Mammary epithelial cell (primary cell): ENCODE measurements at regions of chr18 and their contacts with region 1.

Region 1: GRCh38 chr18:71808616-71809015 is 735.5 kb downstream of the CBLN2 start:
- DNase-seq: no peak
- H3K4me3 ChIP-seq: no peak overlapping the region
- H3K27ac ChIP-seq: no peak overlapping the region
- H3K4me1 ChIP-seq: no peaks in the 10 kb centered on the region
- H3K27me3 ChIP-seq: no peaks in the 10 kb centered on the region
- CTCF ChIP-seq: no peak

Region 2: GRCh38 chr18:71673498-71673897 is 135.1 kb before region 1 on chr18:
- CTCF ChIA-PET with region 1: no interaction called
- dilution Hi-C with region 1: no loop called
- in situ Hi-C with region 1: no loop called
- intact Hi-C with region 1: no loop called
- DNase-seq: no peak
- H3K4me3 ChIP-seq: no peak overlapping the region
- H3K27ac ChIP-seq: no peak overlapping the region
- H3K4me1 ChIP-seq: no peaks in the 10 kb centered on the region
- H3K27me3 ChIP-seq: no peaks in the 10 kb centered on the region
- CTCF ChIP-seq: no peak

Region 3: DNA sequence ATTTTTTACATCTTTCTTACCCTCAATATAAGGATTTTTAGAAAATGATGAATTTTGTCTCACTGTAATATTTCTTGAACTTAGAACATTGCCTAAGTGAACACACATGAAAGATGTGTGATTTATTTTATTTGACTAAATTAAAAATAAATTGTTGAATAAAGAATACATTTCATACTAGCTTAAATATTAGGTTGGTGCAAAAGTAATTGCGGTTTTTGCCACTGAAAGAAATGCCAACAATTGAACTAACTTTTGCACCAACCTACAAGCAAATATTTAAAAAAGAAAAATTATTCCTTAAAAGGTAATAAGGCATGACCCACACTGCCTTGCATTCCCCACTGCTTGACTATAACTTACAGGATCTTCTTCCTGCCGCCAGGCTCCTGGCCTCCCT is 18.2 kb after region 1 on chr18:
- CTCF ChIA-PET with region 1: interaction called, 12 read pairs
- dilution Hi-C with region 1: no loop called
- in situ Hi-C with region 1: no loop called
- intact Hi-C with region 1: no loop called
- DNase-seq: no peak
- H3K4me3 ChIP-seq: no peak overlapping the region
- H3K27ac ChIP-seq: no peak overlapping the region
- H3K4me1 ChIP-seq: no peaks in the 10 kb centered on the region
- H3K27me3 ChIP-seq: no peaks in the 10 kb centered on the region
- CTCF ChIP-seq: no peak